OCI-LY7 (cell line): ENCODE measurements at regions of chr20 and their contacts with region 1.

Region 1: GRCh38 chr20:49750611-49751396 is 37.1 kb upstream of the B4GALT5 start:
- DNase-seq: peak; percentile 89
- H3K4me3 ChIP-seq: peak overlapping the region; percentile 51
- H3K27ac ChIP-seq: peak overlapping the region; percentile 91
- H3K4me1 ChIP-seq: peaks cover 52% of the 10 kb centered on the region
- CTCF ChIP-seq: no peak

Region 2: GRCh38 chr20:49541733-49542513 is 208.9 kb before region 1 on chr20:
- CTCF ChIA-PET with region 1: no interaction called
- POLR2A ChIA-PET with region 1: no interaction called
- intact Hi-C with region 1: no loop called
- DNase-seq: peak; percentile 89
- H3K4me3 ChIP-seq: no peak overlapping the region
- H3K27ac ChIP-seq: no peak overlapping the region
- H3K4me1 ChIP-seq: no peaks in the 10 kb centered on the region
- CTCF ChIP-seq: peak; percentile 98

Region 3: DNA sequence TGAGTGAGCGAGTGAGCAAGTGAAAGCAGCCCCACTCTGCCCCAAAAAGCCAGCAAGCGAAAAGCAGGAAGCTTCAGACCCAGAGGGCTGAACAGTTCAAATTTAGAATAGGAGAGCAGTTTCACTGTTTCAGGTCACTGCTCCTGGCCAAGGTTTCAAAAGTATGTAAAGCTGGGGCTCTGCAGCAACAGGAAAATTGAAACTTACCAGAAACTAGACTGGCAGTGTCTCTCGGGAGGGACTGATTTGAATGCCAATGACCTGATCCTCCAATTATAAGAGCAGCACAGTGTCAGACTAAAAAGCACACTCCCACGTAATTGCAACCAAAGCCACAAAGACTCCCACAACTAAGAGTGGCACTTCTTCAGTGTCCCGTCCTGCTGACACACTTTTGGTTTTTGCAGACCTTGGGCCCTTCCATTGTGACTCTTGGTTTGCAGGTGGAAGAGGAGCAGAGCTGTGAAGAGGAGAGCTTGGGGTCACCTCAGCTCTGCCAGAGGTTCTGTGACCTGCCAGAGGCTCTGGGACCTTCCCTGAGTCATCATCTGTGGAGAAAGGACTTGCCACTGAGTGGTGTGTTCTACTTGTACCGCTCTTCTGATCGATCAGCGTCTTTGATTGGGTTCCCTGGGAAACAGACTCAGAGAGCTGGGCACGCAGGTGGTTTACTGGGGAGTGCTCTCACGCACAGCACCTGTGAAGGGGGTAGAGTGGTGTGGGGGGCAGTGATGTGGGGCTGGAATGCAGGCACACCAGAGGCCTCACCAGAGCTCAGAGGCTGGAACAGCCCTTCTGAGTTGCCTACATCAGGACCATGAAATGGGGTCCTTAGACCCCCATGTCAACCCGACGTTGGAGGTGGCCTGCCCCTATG is 130.2 kb before region 1 on chr20:
- CTCF ChIA-PET with region 1: no interaction called
- POLR2A ChIA-PET with region 1: interaction called, 3 read pairs
- intact Hi-C with region 1: loop called (anchors 2 kb)
- DNase-seq: peak; percentile 92
- H3K4me3 ChIP-seq: peak overlapping the region; percentile 62
- H3K27ac ChIP-seq: peak overlapping the region; percentile 95
- H3K4me1 ChIP-seq: peaks cover 70% of the 10 kb centered on the region
- CTCF ChIP-seq: no peak

Region 4: DNA sequence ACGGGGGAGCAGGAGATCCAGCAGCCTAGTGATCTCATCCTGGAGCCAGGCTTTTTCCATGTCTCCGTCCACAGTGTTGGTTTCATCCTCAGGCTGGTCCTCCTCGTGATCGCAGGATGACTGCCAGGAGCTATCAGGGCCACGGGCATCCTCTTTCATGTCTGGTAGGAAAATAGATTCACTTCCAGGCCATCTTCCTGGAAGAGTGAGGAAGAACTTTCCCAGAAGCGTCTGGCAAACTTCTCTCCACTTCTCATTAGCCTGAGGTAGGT is 46.5 kb after region 1 on chr20:
- CTCF ChIA-PET with region 1: no interaction called
- POLR2A ChIA-PET with region 1: interaction called, 3 read pairs
- intact Hi-C with region 1: loop called (anchors 2 kb)
- DNase-seq: no peak
- H3K4me3 ChIP-seq: no peak overlapping the region
- H3K27ac ChIP-seq: no peak overlapping the region
- H3K4me1 ChIP-seq: peaks cover 31% of the 10 kb centered on the region
- CTCF ChIP-seq: no peak

Region 5: GRCh38 chr20:49821870-49822331 is 71.1 kb after region 1 on chr20:
- CTCF ChIA-PET with region 1: no interaction called
- POLR2A ChIA-PET with region 1: no interaction called
- intact Hi-C with region 1: loop called (anchors 5 kb)
- DNase-seq: peak; percentile 64
- H3K4me3 ChIP-seq: peak overlapping the region; percentile 33
- H3K27ac ChIP-seq: peak overlapping the region; percentile 91
- H3K4me1 ChIP-seq: peaks cover 43% of the 10 kb centered on the region
- CTCF ChIP-seq: peak; percentile 75